ENCODE measurements at regions of chr11 and their contacts with region 1.

Region 1: GRCh38 chr11:94563176-94563847 is 3.9 kb upstream of the PIWIL4 start:
- DNase-seq: no peak
- ATAC-seq: peak; percentile 95 to 97
- H3K4me3 ChIP-seq: no peak overlapping the region
- H3K27ac ChIP-seq: no peak overlapping the region
- H3K4me1 ChIP-seq: no peaks in the 10 kb centered on the region
- H3K27me3 ChIP-seq: no peaks in the 10 kb centered on the region

Region 2: DNA sequence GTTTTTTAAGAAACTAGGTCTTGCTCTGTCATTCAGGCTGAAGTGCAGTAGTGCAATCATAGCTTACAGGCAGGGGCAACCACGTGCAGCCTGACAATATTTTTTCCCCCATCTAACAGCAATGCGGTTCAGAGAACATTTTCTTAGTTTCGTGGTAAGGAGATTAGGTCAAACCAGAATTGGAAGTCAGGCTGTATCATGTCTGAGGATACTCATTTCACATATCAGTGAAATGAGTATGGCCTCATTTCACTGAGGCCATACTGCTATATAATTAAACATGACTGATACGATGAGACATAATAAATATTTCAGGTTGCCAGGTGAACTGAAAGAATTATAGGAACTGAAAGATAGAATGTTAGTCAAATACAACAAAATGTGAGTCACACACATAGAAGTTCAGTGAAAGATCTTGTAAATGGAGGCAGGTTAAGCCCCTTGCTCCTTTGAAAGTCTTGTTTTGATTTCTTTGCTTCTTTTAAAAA is 291.4 kb before region 1 on chr11:
- intact Hi-C with region 1: no loop called
- DNase-seq: no peak
- ATAC-seq: no peak
- H3K4me3 ChIP-seq: no peak overlapping the region
- H3K27ac ChIP-seq: no peak overlapping the region
- H3K4me1 ChIP-seq: no peaks in the 10 kb centered on the region
- H3K27me3 ChIP-seq: no peaks in the 10 kb centered on the region

Region 3: DNA sequence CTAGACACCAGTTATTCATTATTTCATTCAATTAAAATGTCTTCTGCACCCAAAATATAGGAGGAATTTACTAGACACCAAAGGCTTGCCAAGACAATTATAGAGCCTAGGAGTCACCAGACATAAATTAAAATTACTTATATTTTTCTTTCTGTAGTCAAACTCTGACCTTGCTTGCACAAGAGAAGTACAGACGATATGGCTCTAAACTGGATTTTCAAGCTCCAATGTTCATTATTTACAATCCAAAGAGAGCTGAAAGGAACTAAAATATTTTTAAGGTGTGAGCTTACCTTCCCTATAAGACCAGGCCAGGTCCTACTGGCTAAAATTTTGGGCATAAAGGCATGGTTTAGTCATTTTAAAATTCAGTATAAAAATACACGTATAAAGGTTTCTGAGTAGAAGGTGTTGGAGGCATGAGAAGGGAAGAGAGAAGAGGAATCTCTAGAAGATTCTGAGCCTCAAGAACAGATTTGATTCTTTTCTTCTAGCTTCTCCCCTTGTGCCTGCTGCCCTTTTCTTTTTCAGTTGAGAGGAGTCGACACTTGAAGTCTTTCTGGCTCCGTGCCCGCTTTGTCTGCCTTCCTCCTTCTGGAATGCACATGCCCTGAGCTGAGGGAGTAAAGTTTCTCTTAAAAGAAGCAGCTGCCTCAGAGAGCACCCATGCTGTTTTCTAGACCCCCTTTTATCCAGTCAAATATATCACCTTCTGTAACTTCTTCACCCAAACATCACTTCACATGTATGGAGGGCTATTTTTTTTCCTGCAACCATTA is 37.6 kb before region 1 on chr11:
- intact Hi-C with region 1: loop called in 3 of 4 experiments (anchors 5 kb)
- DNase-seq: peak; percentile 77 to 92 (median 86)
- ATAC-seq: peak; percentile 29 to 32
- H3K4me3 ChIP-seq: no peak overlapping the region
- H3K27ac ChIP-seq: no peak overlapping the region
- H3K4me1 ChIP-seq: no peaks in the 10 kb centered on the region
- H3K27me3 ChIP-seq: no peaks in the 10 kb centered on the region

Region 4: GRCh38 chr11:94715225-94715624 is 151.9 kb after region 1 on chr11:
- intact Hi-C with region 1: no loop called
- DNase-seq: no peak
- ATAC-seq: no peak
- H3K4me3 ChIP-seq: no peak overlapping the region
- H3K27ac ChIP-seq: no peak overlapping the region
- H3K4me1 ChIP-seq: no peaks in the 10 kb centered on the region
- H3K27me3 ChIP-seq: no peaks in the 10 kb centered on the region

Measured in right cardiac atrium (tissue), 5 donors.